ENCODE measurements at regions of chr2 and their contacts with region 1.

Region 1: DNA sequence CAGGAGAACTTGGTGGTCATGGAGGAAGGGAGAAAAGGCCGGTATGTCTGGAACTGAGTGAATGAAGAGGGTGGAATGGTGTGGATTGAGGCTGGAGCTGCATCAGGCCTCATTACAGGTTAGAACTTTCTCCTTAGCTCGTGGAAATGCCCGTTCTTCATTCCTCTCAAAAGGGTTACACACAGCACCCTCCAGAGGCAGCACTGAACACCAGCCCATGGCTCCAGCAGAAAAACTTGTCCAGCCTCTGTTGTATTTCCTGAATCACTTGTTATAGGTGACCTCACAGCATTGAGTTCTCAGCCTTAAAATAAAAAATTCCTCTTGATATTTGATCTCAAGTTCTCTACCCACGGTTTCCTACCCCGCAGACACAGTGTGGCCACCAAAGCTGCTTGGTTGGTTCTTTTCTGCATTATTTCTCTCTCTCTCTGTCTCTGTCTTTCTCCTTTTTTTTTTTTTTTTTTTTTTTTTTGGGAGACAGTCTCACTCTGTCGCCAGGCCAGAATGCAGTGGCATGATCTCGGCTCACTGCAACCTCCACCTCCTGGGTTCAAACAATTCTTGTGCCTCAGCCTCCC is 89.6 kb downstream of the ITGB1BP1 start:
- DNase-seq: peak; percentile 53
- ATAC-seq: peak; percentile 95
- H3K4me3 ChIP-seq: no peak overlapping the region
- H3K27ac ChIP-seq: no peak overlapping the region
- H3K4me1 ChIP-seq: peaks cover 17 to 19% of the 10 kb centered on the region in 2 experiments
- H3K27me3 ChIP-seq: no peaks in the 10 kb centered on the region
- CTCF ChIP-seq: peak; percentile 76 to 77 (median 77); a peak in 5 of 6 replicates
- POLR2A ChIP-seq: no peak
- RAD21 ChIP-seq: peak; percentile 96

Region 2: GRCh38 chr2:8872821-8873432 is 460.8 kb before region 1 on chr2:
- CTCF ChIA-PET with region 1: no interaction called
- POLR2A ChIA-PET with region 1: no interaction called
- RAD21 ChIA-PET with region 1: no interaction called
- intact Hi-C with region 1: loop called (anchors 10 kb)
- DNase-seq: peak; percentile 50
- ATAC-seq: peak; percentile 75
- H3K4me3 ChIP-seq: no peak overlapping the region
- H3K27ac ChIP-seq: no peak overlapping the region
- H3K4me1 ChIP-seq: no peaks in the 10 kb centered on the region
- H3K27me3 ChIP-seq: no peaks in the 10 kb centered on the region
- CTCF ChIP-seq: peak; percentile 62 to 90 (median 69)
- POLR2A ChIP-seq: no peak
- RAD21 ChIP-seq: peak; percentile 87

Region 3: DNA sequence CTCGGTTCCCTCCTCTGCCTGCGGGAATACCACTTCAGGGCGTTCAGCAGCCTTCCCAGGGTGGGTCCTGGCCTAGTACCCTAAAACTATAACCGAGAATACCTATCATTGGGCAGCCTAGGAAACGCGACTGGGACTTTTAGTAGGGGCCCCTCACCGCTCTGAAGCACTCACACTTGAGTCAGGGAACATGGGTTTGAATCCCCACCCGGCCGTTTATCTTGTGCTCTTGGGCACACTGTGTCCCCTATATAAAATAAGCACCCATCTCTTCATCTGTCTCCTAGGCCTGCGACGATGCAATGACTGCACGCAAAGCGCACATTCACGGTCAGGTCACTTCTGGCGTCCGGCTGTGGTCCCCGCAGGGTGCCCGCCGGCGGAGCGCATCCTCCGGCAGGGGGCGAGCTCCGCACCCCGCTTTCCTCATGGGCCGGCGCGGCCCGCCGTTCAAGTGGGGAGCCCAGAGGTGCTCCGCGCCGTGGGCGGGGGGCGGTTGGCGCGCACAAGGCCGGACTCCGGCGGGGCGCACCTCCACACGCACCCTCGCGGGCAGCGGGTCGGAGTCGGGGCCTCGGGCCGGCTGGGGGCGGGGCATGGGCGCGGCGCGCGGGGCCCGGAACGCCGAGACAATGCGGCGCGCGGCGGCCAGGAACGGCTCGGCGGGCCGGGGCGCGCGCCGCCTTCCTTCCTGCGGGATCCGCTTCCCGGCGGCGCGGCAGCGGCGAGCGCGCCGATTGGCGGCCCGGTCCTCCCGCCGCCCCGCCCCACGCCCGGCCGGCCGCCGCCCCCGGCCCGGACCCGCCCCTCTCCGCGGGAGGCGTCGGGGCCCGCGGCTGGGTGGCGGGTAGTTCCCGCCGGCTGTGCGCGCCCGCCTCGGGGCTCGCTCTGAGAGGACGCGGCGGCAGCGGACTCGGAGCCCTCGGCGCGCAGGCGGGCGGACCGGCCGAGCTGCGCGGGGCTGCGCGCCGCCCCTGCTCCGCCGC is 127.4 kb before region 1 on chr2 and contains the start of gene ASAP2:
- CTCF ChIA-PET with region 1: interaction called, 5 read pairs
- POLR2A ChIA-PET with region 1: no interaction called
- RAD21 ChIA-PET with region 1: no interaction called
- intact Hi-C with region 1: loop called (anchors 2 kb)
- DNase-seq: no peak
- ATAC-seq: peak; percentile 74
- H3K4me3 ChIP-seq: peak within 1 kb of the TSS; percentile 66 to 82
- H3K27ac ChIP-seq: peak within 1 kb of the TSS; percentile 68
- H3K4me1 ChIP-seq: peaks cover 17 to 34% of the 10 kb centered on the region in 2 experiments
- H3K27me3 ChIP-seq: no peaks in the 10 kb centered on the region
- CTCF ChIP-seq: peak; percentile 46 to 79 (median 73); a peak in 4 of 6 replicates
- POLR2A ChIP-seq: peak; percentile 42
- RAD21 ChIP-seq: peak; percentile 70
- total RNA-seq, gene ASAP2: 16.5 TPM

Region 4: DNA sequence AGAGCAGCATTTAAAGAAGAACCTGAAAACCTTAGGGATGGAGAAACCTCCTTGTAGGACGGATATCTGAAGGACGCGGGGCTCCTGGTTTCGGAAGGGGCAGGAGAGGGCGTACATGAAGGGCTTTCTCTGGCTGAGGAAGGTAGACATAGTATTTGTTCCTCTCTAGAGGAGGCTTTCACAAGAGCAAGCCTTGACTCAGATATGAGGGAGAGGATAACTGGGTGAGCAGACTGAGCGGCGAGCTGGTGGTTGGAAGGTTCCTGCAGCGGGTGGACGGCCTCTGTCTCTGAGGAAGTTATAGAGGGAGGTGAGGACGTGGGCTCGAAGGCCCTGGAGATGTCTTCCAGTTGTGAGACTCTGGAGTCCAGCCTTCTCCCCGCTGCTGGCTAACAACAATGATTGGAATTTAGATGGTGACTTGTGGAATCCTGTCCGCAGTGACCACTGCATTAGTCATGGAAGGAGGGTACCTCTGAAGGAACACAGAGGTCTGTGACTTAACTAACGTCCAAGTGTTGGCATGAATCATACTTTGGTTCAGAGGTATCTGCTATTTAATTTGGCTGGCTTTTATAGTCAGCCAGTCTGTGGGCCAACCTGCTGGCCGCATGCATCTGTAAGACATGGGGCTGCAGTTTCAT is 46.2 kb before region 1 on chr2:
- CTCF ChIA-PET with region 1: no interaction called
- POLR2A ChIA-PET with region 1: no interaction called
- RAD21 ChIA-PET with region 1: no interaction called
- intact Hi-C with region 1: loop called (anchors 1 kb)
- DNase-seq: peak; percentile 97
- ATAC-seq: peak; percentile 86
- H3K4me3 ChIP-seq: peak overlapping the region in 1 of 2 experiments; percentile 47; a peak in 2 of 4 replicates
- H3K27ac ChIP-seq: peak overlapping the region; percentile 72
- H3K4me1 ChIP-seq: peaks cover 38 to 60% of the 10 kb centered on the region in 2 experiments
- H3K27me3 ChIP-seq: no peaks in the 10 kb centered on the region
- CTCF ChIP-seq: no peak
- POLR2A ChIP-seq: no peak
- RAD21 ChIP-seq: peak; percentile 31; the same call in 1 of the 2 replicates

Region 5: GRCh38 chr2:10900216-10901109 is 1566.8 kb after region 1 on chr2:
- CTCF ChIA-PET with region 1: no interaction called
- POLR2A ChIA-PET with region 1: no interaction called
- RAD21 ChIA-PET with region 1: no interaction called
- intact Hi-C with region 1: no loop called
- DNase-seq: peak; percentile 68
- ATAC-seq: peak; percentile 95
- H3K4me3 ChIP-seq: no peak overlapping the region
- H3K27ac ChIP-seq: 0 out of 2 replicates have a peak overlapping the region, but pooled peaks have one; percentile 40
- H3K4me1 ChIP-seq: peaks cover 9 to 20% of the 10 kb centered on the region in 2 experiments; a peak in 3 of 4 replicates
- H3K27me3 ChIP-seq: no peaks in the 10 kb centered on the region
- CTCF ChIP-seq: peak; percentile 62 to 73 (median 69)
- POLR2A ChIP-seq: no peak
- RAD21 ChIP-seq: peak; percentile 53